ENCODE measurements at regions of chr2 and their contacts with region 1.

Region 1: DNA sequence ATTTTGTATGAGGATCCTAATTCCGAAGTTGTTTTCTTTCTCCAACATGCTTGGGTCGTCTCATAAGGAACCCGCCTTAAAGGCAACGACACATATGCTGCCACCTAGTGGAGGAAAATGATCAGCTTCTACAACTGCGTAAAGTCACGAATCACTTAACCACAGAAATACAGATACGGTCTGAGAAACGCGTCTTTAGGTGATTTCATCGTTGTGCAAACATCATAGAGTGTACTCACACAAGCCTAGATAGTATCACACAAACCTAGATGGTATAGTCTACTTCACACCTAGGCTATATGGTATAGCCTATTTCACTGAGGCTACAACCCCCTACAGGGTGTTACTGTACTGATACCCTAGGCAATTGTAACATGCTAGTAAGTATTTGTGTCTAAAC is 13.1 kb downstream of the GNLY start:
- DNase-seq: no peak

Region 2: DNA sequence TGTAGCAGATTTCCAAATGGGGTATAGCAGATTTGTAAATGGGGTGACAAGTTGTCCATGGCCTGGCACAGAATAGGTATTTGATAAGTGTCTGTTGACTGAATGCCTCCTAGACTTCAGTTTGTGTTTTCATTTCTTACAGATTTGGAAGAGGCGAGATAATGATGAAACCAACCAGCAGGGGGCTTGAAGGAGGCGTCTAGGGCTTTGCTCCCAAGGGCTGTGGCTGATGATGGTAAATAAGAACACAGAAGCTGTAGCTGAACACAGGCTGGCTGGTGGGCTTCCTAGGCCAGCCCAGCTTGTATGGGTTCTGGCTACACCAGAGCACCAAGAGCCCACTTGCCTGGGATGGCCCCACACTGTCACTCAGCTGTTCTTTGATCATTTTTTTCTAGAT is 58.7 kb before region 1 on chr2:
- intact Hi-C with region 1: loop called (anchors 5 kb)
- DNase-seq: no peak

Region 3: DNA sequence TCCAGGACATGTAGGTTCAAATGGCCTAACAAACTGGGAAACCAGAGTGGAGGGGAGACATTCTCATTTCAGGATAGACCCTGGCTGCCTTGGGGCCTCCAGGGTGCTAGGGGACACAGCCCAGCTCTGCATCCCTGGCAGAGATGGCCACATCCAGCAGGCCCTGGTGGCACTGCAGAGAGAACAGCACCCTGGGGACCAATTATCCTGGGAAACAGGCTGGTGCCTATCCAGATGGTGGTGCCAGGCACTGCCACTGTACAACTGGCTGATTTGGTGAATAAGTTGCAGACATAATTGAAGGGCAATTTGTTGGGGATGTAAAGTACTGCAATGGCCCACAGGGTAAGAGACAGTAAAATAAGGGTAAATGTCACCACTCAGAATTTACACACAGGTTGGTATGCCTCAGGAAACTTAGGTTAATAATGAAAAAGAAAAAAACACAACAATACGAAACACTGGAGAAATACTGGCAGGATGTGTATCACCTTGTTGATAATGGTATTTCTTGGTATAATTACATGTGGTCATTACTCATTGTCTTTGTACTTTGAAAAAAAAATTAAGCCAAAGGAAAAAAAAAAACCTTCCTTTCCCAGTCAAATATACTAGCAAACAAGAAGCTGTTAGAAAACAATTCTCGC is 26.5 kb before region 1 on chr2:
- intact Hi-C with region 1: loop called (anchors 1 kb)
- DNase-seq: no peak

Region 4: DNA sequence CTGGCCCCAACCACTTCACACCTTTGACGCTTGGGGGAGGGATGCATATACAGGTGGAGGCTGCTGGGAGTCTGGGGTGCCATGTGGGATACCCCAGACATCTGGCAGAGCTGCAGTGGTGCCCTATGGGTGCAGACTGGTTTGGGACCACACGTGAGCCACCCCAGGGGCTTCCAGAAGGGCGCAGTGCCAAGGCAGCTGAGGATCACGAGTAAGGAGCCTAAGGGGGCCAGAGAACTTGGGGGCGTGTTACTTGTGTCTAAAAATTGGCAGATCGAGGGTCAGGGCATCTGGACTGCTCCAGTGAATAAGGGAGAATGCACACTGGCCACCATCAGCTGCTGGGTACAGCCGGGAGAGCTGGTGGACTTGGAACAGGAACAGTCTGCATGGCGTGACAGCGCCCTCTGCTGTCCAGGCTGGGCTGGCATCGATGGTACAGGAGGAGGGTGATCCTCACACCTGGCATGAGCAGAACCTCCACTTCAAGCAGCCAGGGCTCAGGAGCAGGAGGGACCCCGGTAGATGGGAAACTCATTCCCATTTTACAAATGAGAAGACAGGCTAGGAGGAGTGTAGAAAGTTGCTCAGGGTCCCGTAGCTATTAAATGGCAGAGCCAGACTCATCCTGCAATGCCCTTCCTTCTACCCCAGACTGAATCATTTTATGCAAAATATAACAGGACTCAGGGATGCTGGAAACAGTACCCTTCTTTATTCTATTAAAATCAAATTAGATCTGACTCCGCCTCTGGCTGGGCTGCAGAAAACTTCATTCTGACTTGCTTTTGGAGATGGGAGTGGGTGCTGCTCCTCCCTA is 106.9 kb after region 1 on chr2:
- intact Hi-C with region 1: no loop called
- DNase-seq: peak; percentile 95

Region 5: DNA sequence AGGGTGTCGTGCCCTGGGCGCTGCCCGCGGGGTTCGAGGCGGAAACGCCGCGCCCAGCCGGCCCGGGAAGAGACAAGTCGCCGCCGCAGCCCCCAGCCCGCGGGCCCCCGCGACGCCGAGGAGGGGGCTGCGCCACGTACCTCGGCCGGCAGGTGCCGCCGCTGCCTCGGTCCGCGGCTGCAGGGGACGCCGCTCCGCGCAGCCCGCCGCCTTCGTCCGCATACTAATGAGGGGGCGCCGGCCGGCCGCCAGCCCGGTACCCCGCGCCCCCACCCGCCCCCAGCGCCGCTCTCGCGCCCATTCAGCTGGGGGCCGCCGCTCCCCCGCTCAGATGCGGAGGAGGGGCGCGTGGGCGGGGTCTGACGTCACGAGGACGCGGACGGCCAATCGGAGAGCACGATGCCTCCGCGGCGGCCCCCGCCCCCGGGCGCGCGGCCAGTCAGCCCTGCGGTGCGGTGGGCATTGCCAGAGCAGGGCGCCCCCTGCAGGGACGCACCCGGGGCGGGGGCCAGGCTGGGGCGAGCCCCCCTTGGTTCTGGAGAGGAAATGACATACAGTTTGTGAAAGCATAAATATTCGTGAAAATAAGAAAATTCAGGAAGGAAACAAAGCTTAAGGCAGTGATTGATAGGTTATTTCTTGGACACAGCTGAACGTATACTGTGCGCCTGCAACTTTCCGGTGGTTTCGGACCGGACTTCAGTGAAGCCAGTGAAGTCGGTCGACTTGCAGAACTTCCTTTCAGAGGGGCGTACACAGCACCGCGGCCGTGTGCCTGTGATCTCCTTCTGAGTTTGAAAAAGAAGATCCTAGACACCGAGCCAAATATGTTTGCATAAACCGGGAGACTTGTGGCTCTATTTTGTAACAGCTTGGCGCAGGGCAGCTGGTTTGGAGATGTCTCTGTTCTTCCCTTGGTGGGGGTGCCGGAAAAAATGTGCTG is 181.7 kb after region 1 on chr2 and contains the start of gene ST3GAL5:
- intact Hi-C with region 1: no loop called
- DNase-seq: peak; percentile 94
- total RNA-seq, gene ST3GAL5: 3.8 TPM